ENCODE measurements at regions of chr14 and their contacts with region 1.

Region 1: DNA sequence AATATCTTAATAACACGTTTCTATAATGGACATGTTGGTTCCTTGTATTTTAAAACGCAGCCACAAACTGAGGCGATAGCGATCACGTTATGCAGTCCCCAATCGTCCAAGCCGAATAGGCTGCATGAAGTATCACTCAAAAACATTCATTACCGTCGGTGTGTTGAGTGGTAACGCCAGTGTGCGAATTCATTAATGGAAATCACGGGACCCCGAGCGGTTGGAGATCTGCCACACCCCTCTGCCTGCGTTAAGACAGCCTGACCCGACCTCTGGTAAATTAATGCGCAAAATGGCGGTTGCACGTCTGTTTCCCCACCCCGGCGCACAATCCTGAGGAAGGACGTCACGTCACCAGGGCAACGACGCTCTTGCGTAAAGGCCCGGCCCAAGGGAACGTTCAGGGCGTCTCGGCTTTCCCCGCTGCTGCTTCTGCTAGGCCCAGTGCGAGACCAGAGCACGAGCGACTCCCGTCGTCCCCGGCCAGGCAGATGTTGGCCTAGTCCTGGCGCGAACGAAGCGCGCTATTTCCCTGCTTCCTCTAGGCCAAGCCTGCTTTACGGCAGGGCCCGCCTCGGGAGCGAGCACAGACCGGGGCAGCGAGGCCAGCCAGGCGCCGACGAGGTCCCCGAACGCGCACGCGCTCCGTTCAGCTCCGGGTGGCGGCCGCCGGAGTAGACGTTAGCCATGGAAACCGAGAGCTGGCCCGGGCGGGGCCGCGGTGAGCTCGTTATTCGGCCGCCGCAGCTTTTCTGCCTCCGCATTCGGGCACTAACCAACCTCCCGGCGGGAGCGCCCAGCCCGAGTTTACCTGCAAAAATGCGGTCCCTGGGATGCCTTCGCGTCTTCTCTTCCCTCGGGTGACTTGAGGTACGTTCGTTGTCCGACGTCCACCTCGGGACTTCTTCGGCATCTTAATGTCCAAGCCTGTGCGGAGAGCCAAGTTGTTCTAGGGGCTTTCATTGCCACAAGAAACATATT is at the start of gene PCNX4:
- DNase-seq: peak; percentile 95
- H3K4me3 Mint-ChIP-seq: peak within 1 kb of the TSS; percentile 98
- H3K27ac Mint-ChIP-seq: peak within 1 kb of the TSS; percentile 95
- H3K4me1 Mint-ChIP-seq: peaks cover 34% of the 10 kb centered on the region
- H3K27me3 Mint-ChIP-seq: peaks cover 9% of the 10 kb centered on the region
- total RNA-seq, gene PCNX4: 24.9 to 27.5 TPM

Region 2: GRCh38 chr14:60051721-60052221 is 40.1 kb before region 1 on chr14:
- CTCF ChIA-PET with region 1: no interaction called
- intact Hi-C with region 1: loop called (anchors 2 kb)
- DNase-seq: peak; percentile 54
- H3K4me3 Mint-ChIP-seq: peak overlapping the region; percentile 7
- H3K27ac Mint-ChIP-seq: no peak overlapping the region
- H3K4me1 Mint-ChIP-seq: peaks cover 34% of the 10 kb centered on the region
- H3K27me3 Mint-ChIP-seq: no peaks in the 10 kb centered on the region

Region 3: GRCh38 chr14:60064491-60065072 is 27.3 kb before region 1 on chr14:
- CTCF ChIA-PET with region 1: interaction called, 3 read pairs
- intact Hi-C with region 1: loop called (anchors 2 kb)
- DNase-seq: no peak
- H3K4me3 Mint-ChIP-seq: no peak overlapping the region
- H3K27ac Mint-ChIP-seq: no peak overlapping the region
- H3K4me1 Mint-ChIP-seq: no peaks in the 10 kb centered on the region
- H3K27me3 Mint-ChIP-seq: peaks cover 1% of the 10 kb centered on the region

Region 4: DNA sequence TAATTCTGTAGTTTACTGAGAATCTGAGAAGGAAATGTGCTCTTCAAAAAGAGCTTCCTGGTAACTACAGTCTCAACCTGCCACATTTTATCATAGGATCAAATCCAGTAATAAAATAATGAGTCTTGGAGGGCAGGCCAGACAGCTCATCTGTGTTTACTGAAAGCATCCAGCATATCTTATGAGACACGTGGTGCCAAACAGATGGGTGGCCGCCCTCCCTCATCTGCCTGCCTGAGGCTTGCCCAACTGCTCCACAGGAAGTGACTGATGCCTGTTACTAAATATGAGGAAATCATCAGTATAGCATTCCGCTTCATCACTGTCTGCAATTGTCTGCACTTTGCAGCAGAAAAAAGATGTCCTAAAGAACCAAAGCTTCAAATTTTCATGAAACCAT is 59.9 kb after region 1 on chr14:
- CTCF ChIA-PET with region 1: interaction called, 3 read pairs
- intact Hi-C with region 1: loop called (anchors 1 kb)
- DNase-seq: peak; percentile 87
- H3K4me3 Mint-ChIP-seq: no peak overlapping the region
- H3K27ac Mint-ChIP-seq: peak overlapping the region; percentile 86
- H3K4me1 Mint-ChIP-seq: peaks cover 30% of the 10 kb centered on the region
- H3K27me3 Mint-ChIP-seq: no peaks in the 10 kb centered on the region

Region 5: DNA sequence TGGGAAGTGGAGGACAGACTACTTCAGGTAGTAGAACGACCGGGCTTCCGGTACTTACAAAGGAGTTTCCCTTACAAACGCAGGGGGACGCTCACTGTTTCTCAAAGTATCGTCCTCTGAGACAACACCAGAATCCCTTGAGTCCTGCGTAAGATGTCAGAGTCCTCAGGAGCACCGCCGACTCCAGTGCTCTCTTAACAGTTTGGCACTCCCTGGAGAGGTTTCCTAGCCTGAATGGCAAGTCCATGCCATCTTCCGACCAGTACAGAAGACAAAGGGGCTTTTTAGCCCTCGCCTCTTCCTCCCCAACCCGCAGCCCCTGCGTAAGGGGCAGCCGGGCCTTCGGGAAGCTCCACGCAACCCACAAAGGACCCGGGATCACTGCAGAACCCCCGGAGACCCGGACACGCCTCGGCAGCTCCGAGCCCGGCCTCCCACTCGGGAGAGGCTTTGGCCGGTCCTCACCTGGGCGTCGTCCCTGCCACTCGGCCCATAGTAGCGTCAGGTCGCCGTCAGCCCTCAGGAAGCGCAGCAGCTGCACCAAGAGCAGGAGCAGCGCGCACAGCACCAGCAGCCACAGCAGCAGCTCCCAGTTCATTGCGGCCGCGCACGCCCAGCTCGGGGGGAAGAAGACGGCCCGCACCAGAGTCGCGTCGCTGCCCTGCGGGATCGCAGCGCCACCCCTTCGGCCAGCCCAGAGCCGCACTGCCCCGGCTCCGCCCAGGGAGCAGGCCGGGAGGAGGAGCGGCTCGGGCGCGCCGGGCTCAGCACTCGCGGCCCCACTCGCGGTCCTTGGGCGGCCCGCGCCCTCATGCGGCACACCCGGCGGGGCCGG is 73.1 kb after region 1 on chr14 and contains the start of gene DHRS7:
- CTCF ChIA-PET with region 1: interaction called, 5 read pairs
- intact Hi-C with region 1: loop called (anchors 1 kb)
- DNase-seq: peak; percentile 65
- H3K4me3 Mint-ChIP-seq: peak within 1 kb of the TSS; percentile 89
- H3K27ac Mint-ChIP-seq: peak within 1 kb of the TSS; percentile 96
- H3K4me1 Mint-ChIP-seq: peaks cover 39% of the 10 kb centered on the region
- H3K27me3 Mint-ChIP-seq: no peaks in the 10 kb centered on the region
- total RNA-seq, gene DHRS7: 40.5 to 43.4 TPM

Region 6: GRCh38 chr14:61761959-61762786 is 1670.3 kb after region 1 on chr14 and contains the start of gene SNAPC1:
- CTCF ChIA-PET with region 1: no interaction called
- intact Hi-C with region 1: loop called (anchors 5 kb)
- DNase-seq: peak; percentile 99
- H3K4me3 Mint-ChIP-seq: peak within 1 kb of the TSS; percentile 97
- H3K27ac Mint-ChIP-seq: peak within 1 kb of the TSS; percentile 96
- H3K4me1 Mint-ChIP-seq: peaks cover 40% of the 10 kb centered on the region
- H3K27me3 Mint-ChIP-seq: no peaks in the 10 kb centered on the region
- total RNA-seq, gene SNAPC1: 8.7 to 9.2 TPM